MCF 10A (cell line): ENCODE measurements at regions of chr1 and their contacts with region 1.

Region 1: GRCh38 chr1:160376525-160377131 is 9.8 kb downstream of the NHLH1 start:
- DNase-seq: peak; percentile 81
- H3K4me3 Mint-ChIP-seq: no peak overlapping the region
- H3K27ac Mint-ChIP-seq: no peak overlapping the region
- H3K4me1 Mint-ChIP-seq: peaks cover 13% of the 10 kb centered on the region
- H3K27me3 Mint-ChIP-seq: peaks cover 19% of the 10 kb centered on the region
- CTCF ChIP-seq: peak; percentile 98

Region 2: DNA sequence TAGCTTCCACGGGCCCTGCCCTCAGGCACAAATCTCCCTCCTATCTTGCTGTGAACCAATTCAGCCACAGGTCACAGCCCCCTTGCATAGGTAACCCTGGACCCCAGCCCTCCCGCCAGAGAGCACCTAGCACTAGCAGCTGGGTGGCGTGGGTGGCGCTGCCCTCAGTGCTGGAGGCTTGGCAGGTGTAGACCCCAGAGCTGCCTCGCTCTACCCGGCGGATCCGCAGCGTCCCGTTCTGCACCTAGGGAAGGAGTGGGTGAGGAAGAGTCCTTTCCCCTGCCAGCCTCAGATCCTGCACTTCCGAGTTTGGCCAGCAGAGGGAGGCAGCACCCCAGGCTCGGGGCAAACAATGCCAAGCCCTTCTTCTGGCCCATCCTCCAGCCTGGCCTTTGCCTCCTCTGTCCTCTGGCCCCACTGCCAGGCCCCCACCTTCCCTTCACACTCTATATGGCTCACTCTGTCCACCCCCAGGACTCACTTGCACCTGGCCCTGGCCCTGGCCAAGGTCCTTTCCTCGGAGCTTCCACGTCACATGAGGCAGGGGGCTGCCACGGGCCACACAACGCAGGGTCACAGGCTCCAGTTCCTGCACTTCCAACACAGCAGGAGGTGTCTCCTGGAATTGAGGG is 440.2 kb before region 1 on chr1:
- CTCF ChIA-PET with region 1: no interaction called
- POLR2A ChIA-PET with region 1: no interaction called
- intact Hi-C with region 1: loop called (anchors 10 kb)
- DNase-seq: peak; percentile 85
- H3K4me3 Mint-ChIP-seq: no peak overlapping the region
- H3K27ac Mint-ChIP-seq: no peak overlapping the region
- H3K4me1 Mint-ChIP-seq: peaks cover 22% of the 10 kb centered on the region
- H3K27me3 Mint-ChIP-seq: no peaks in the 10 kb centered on the region
- CTCF ChIP-seq: peak; percentile 100

Region 3: DNA sequence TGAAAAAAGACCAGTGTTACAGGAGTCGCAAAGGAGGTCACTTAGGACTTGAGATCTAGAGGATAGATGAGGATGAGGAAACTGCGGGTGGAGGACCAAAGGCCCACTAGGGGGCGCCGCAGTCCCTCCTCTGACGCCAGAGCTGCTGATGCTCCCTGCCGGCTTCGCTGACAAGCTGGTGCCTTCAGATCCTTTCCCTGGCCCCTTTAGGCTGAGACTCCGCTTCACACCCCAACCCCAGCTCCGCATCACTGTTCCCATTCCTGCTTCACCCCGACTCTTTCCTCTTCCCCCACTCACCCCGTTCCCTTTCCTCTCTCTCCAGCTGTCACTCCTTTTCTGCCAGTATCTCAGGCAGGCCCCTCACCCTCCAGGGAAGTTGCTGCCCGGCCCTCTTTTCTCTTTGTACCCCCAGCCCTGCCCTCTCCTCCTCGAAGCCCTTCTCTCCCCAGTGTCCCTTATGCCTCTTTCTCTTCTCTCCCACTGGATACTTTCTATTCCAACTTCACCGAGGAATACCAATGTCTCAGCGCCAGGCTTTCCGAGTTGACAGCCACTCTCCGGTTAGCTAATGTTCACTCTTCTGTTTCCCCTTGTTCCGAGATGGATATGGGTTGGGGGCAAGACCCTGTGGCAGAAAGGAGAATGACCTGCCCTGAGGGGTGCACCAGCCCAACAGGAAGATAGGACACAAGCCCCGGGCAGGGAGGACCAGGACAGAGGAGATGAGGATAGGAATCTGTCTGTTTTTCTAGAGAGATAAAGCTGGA is 290.8 kb before region 1 on chr1:
- CTCF ChIA-PET with region 1: interaction called, 3 read pairs
- POLR2A ChIA-PET with region 1: no interaction called
- intact Hi-C with region 1: loop called (anchors 1 kb)
- DNase-seq: peak; percentile 82
- H3K4me3 Mint-ChIP-seq: no peak overlapping the region
- H3K27ac Mint-ChIP-seq: no peak overlapping the region
- H3K4me1 Mint-ChIP-seq: peaks cover 5% of the 10 kb centered on the region
- H3K27me3 Mint-ChIP-seq: peaks cover 24% of the 10 kb centered on the region
- CTCF ChIP-seq: peak; percentile 96

Region 4: GRCh38 chr1:160342953-160343869 is 33.4 kb before region 1 on chr1 and contains the starts of genes COPA and NCSTN:
- CTCF ChIA-PET with region 1: interaction called, 11 read pairs
- POLR2A ChIA-PET with region 1: interaction called, 9 read pairs
- intact Hi-C with region 1: no loop called
- DNase-seq: peak; percentile 98
- H3K4me3 Mint-ChIP-seq: peak within 1 kb of the TSS; percentile 87
- H3K27ac Mint-ChIP-seq: peak within 1 kb of the TSS; percentile 99
- H3K4me1 Mint-ChIP-seq: peaks cover 29% of the 10 kb centered on the region
- H3K27me3 Mint-ChIP-seq: no peaks in the 10 kb centered on the region
- CTCF ChIP-seq: no peak
- total RNA-seq, gene COPA: 273 and 353 TPM in 2 replicates
- total RNA-seq, gene NCSTN: 125 and 129 TPM in 2 replicates

Region 5: GRCh38 chr1:160362168-160362957 is 14.3 kb before region 1 on chr1:
- CTCF ChIA-PET with region 1: interaction called, 181 read pairs
- POLR2A ChIA-PET with region 1: interaction called, 3 read pairs
- intact Hi-C with region 1: no loop called
- DNase-seq: no peak
- H3K4me3 Mint-ChIP-seq: no peak overlapping the region
- H3K27ac Mint-ChIP-seq: peak overlapping the region; percentile 26
- H3K4me1 Mint-ChIP-seq: peaks cover 5% of the 10 kb centered on the region
- H3K27me3 Mint-ChIP-seq: peaks cover 4% of the 10 kb centered on the region
- CTCF ChIP-seq: no peak

Region 6: DNA sequence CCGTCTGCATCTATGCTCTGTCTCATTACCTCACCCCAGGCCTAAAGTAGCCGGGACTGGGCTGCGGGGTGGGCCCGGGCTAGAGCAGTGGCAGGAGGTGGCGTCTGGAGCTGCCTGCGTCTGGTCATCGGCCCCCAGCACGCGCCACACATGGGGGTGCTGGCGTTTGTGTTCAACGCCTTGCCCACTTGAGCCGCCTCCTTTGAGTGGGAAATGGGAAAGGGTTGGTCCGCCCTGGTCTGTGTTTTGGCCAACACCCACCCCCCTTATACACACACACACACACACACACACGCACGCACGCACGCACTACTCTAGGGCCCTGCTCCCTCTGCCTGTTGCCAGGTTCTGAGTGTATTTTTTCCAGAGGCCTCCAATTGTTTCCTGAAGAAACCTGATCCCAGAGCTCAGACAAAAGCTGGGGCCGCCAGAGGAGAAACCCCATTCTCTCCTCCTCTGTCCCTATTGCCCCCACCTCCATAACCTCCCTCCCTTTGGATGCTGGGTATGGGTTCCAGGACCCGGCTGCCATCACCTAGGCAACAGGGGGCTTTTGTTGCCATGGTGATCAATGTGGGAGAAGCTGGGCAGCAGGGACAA is 33.9 kb after region 1 on chr1:
- CTCF ChIA-PET with region 1: interaction called, 116 read pairs
- POLR2A ChIA-PET with region 1: interaction called, 7 read pairs
- intact Hi-C with region 1: no loop called
- DNase-seq: no peak
- H3K4me3 Mint-ChIP-seq: no peak overlapping the region
- H3K27ac Mint-ChIP-seq: no peak overlapping the region
- H3K4me1 Mint-ChIP-seq: peaks cover 21% of the 10 kb centered on the region
- H3K27me3 Mint-ChIP-seq: no peaks in the 10 kb centered on the region
- CTCF ChIP-seq: no peak

Region 7: GRCh38 chr1:160428655-160429054 is 52.0 kb after region 1 on chr1:
- CTCF ChIA-PET with region 1: interaction called, 10 read pairs
- POLR2A ChIA-PET with region 1: no interaction called
- intact Hi-C with region 1: no loop called
- DNase-seq: peak; percentile 70
- H3K4me3 Mint-ChIP-seq: no peak overlapping the region
- H3K27ac Mint-ChIP-seq: no peak overlapping the region
- H3K4me1 Mint-ChIP-seq: no peaks in the 10 kb centered on the region
- H3K27me3 Mint-ChIP-seq: peaks cover 8% of the 10 kb centered on the region
- CTCF ChIP-seq: peak; percentile 93

Region 8: DNA sequence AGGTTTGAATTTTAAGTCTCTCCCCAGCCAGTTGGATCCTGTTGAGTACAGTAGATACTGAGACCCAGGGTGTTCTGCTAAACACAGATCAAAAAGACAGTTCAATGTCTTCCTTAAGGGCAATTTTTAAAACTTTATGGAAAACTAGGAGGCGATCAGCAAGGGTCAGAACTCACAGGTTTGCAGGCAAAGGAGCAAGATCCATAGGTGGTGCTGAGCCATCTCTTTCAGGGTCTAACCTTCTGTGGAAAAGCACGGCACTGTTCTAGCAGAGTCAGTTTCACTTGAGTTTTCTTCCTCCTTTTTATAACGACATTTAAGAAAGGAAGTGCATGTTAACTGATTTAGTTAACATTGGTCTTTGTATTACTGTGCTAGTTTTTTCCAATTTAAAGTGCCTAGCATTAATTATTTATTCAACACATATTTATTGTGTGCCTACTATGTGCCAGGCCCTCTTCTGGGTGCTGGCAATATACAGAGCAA is 202.6 kb after region 1 on chr1 and contains the start of gene CD84:
- CTCF ChIA-PET with region 1: no interaction called
- POLR2A ChIA-PET with region 1: no interaction called
- intact Hi-C with region 1: no loop called
- DNase-seq: no peak
- H3K4me3 Mint-ChIP-seq: no peak within 1 kb of the TSS
- H3K27ac Mint-ChIP-seq: no peak within 1 kb of the TSS
- H3K4me1 Mint-ChIP-seq: no peaks in the 10 kb centered on the region
- H3K27me3 Mint-ChIP-seq: peaks cover 57% of the 10 kb centered on the region
- CTCF ChIP-seq: no peak
- total RNA-seq, gene CD84: not detected in 2 replicates

Region 9: DNA sequence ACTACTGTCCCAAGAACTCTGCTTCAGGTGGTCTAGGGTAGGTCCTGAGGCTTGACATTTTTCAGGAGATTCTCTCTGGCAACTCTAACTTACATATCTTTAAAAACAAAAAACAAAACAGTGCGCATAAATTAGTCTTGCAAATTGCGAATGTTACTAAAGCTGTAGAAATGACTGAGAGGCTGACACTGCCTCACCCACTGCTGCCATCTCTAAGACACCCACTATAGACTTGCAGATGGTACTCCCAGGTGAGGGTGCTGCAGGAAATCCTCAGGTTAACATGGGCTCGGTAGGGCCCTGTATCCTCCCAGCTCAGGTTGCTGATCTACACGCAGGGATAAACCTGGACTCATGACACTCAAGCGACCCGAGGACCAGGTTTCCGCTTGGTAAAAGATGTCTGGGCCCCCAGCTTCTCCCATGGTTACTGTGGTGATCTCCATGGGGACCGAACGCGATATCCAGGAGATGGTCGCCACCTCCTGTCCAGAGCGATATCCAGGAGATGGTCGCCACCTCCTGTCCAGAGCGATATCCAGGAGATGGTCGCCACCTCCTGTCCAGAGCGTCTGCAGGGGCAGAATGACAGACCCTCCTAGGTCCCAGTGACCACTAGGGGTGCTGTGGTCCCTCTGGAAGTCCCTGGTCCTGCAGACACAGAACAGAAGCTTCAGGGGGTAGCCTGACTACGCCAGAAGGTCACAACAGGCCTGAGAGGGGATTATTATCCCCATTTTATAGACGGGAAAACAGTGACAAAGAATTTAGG is 403.2 kb after region 1 on chr1:
- CTCF ChIA-PET with region 1: no interaction called
- POLR2A ChIA-PET with region 1: no interaction called
- intact Hi-C with region 1: no loop called
- DNase-seq: peak; percentile 48
- H3K4me3 Mint-ChIP-seq: no peak overlapping the region
- H3K27ac Mint-ChIP-seq: no peak overlapping the region
- H3K4me1 Mint-ChIP-seq: no peaks in the 10 kb centered on the region
- H3K27me3 Mint-ChIP-seq: no peaks in the 10 kb centered on the region
- CTCF ChIP-seq: peak; percentile 41